Activated naive CD4-positive, alpha-beta T cell treated with anti-CD3 and anti-CD28 coated beads for 36 hours (primary cell): ENCODE measurements at regions of chr12 and their contacts with region 1.

Region 1: GRCh38 chr12:119902084-119902509 is 25.0 kb upstream of the CIT start:
- DNase-seq: peak; percentile 89
- H3K4me3 Mint-ChIP-seq: no peak overlapping the region
- H3K27ac Mint-ChIP-seq: no peak overlapping the region
- H3K4me1 Mint-ChIP-seq: peaks cover 8% of the 10 kb centered on the region
- H3K27me3 Mint-ChIP-seq: no peaks in the 10 kb centered on the region

Region 2: GRCh38 chr12:119659289-119659897 is 242.7 kb before region 1 on chr12:
- CTCF ChIA-PET with region 1: no interaction called
- intact Hi-C with region 1: loop called (anchors 1 kb)
- DNase-seq: peak; percentile 69
- H3K4me3 Mint-ChIP-seq: no peak overlapping the region
- H3K27ac Mint-ChIP-seq: no peak overlapping the region
- H3K4me1 Mint-ChIP-seq: no peaks in the 10 kb centered on the region
- H3K27me3 Mint-ChIP-seq: no peaks in the 10 kb centered on the region

Region 3: GRCh38 chr12:119667577-119668323 is 234.3 kb before region 1 on chr12 and contains the start of gene PRKAB1:
- CTCF ChIA-PET with region 1: no interaction called
- intact Hi-C with region 1: loop called (anchors 2 kb)
- DNase-seq: peak; percentile 96
- H3K4me3 Mint-ChIP-seq: peak within 1 kb of the TSS; percentile 90
- H3K27ac Mint-ChIP-seq: peak within 1 kb of the TSS; percentile 95
- H3K4me1 Mint-ChIP-seq: peaks cover 52% of the 10 kb centered on the region
- H3K27me3 Mint-ChIP-seq: no peaks in the 10 kb centered on the region
- total RNA-seq, gene PRKAB1: 34.3 to 39.8 TPM

Region 4: DNA sequence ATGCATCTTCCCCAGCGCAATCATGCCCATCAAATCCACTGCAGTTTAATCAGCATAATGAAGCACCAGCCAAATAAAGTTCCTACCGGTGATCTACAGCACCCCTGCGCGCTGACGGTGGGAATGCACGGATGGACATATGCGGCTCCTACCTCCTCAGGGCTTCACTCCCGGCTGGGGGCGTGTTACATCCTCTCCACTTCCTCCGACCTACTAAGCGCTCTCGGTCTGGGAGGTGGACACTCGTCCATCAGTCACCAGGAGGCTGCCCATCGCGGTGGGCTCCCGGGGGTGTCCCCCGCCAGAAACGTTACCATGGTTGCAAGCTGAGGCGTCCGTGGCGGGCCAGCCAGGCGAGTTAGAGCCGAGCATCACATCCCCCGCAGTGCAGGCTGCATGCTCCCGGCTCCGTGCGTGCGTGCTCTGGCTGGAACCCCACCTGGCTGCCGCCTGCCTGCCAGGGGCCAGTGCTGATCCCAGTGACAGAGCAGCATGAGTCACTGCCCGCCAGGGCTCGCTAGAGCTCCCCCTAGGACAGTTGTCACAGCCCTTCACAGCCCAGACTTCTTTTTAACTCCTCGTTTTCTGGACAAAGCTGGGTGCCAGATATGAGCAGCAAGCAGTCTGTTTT is 98.0 kb before region 1 on chr12:
- CTCF ChIA-PET with region 1: no interaction called
- intact Hi-C with region 1: no loop called
- DNase-seq: no peak
- H3K4me3 Mint-ChIP-seq: no peak overlapping the region
- H3K27ac Mint-ChIP-seq: no peak overlapping the region
- H3K4me1 Mint-ChIP-seq: peaks cover 5% of the 10 kb centered on the region
- H3K27me3 Mint-ChIP-seq: no peaks in the 10 kb centered on the region

Region 5: GRCh38 chr12:119835068-119835467 is 67.0 kb before region 1 on chr12:
- CTCF ChIA-PET with region 1: no interaction called
- intact Hi-C with region 1: no loop called
- DNase-seq: no peak
- H3K4me3 Mint-ChIP-seq: no peak overlapping the region
- H3K27ac Mint-ChIP-seq: no peak overlapping the region
- H3K4me1 Mint-ChIP-seq: no peaks in the 10 kb centered on the region
- H3K27me3 Mint-ChIP-seq: no peaks in the 10 kb centered on the region

Region 6: GRCh38 chr12:119876761-119877638 is 25.1 kb before region 1 on chr12 and contains the start of gene CIT:
- CTCF ChIA-PET with region 1: interaction called, 5 read pairs
- intact Hi-C with region 1: loop called (anchors 1 kb)
- DNase-seq: peak; percentile 94
- H3K4me3 Mint-ChIP-seq: peak within 1 kb of the TSS; percentile 97
- H3K27ac Mint-ChIP-seq: peak within 1 kb of the TSS; percentile 42
- H3K4me1 Mint-ChIP-seq: peaks cover 13% of the 10 kb centered on the region
- H3K27me3 Mint-ChIP-seq: no peaks in the 10 kb centered on the region
- total RNA-seq, gene CIT: 78.6 to 78.8 TPM